ENCODE measurements at regions of chr1 and their contacts with region 1.

Region 1: GRCh38 chr1:19209990-19210771 is at the start of gene UBR4:
- DNase-seq: peak; percentile 97
- ATAC-seq: peak; percentile 98
- total RNA-seq, gene UBR4: 53.9 TPM

Region 2: GRCh38 chr1:19199969-19200604 is 10.1 kb before region 1 on chr1:
- intact Hi-C with region 1: loop called (anchors 2 kb)
- DNase-seq: no peak
- ATAC-seq: no peak

Region 3: DNA sequence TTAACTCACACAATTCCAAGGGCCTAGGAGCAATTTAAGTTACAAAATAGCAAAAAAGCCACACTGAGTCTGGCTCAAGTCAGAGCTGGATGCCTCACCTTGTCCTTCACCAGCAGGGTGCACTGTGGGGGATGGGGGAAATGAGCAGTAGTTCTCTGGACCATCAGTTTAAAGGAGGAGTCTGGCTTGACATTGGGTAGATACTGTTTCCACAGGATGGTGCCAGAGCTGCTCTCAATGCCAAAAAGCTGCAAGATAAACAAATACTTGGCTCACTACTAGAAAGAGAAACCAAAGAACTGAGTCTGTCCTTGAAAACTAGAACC is 22.3 kb after region 1 on chr1:
- intact Hi-C with region 1: loop called (anchors 1 kb)
- DNase-seq: no peak
- ATAC-seq: peak; percentile 82

Measured in Right ventricle myocardium inferior (tissue), 1 donor.